ENCODE measurements at regions of chr3 and their contacts with region 1.

Region 1: DNA sequence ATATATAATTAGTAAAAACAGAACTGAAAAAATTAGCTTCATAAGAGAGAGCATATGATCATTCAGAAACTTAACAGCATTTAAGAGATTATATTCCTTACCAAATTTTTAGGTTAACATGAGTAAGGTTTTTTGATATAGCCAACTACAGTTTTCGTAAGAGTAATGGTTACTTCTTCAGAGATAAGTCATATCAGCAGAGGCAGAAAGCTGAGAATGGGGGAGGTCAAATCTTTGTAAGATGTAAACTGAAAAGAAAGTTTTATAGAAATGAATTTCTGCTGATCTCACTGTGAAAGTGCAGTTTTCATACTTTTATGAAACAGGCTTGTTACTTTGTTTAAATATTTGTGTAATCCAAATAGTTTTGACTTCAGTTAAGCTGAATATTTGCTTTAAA is 193.3 kb downstream of the ZBTB20 start:
- DNase-seq: no peak
- H3K4me3 ChIP-seq: no peak overlapping the region
- H3K4me3 Mint-ChIP-seq: no peak overlapping the region
- H3K27ac Mint-ChIP-seq: no peak overlapping the region
- H3K4me1 ChIP-seq: no peaks in the 10 kb centered on the region
- H3K4me1 Mint-ChIP-seq: no peaks in the 10 kb centered on the region
- H3K27me3 ChIP-seq: no peaks in the 10 kb centered on the region; the same call in 1 of the 2 replicates
- H3K27me3 Mint-ChIP-seq: no peaks in the 10 kb centered on the region
- CTCF ChIP-seq: no peak

Region 2: DNA sequence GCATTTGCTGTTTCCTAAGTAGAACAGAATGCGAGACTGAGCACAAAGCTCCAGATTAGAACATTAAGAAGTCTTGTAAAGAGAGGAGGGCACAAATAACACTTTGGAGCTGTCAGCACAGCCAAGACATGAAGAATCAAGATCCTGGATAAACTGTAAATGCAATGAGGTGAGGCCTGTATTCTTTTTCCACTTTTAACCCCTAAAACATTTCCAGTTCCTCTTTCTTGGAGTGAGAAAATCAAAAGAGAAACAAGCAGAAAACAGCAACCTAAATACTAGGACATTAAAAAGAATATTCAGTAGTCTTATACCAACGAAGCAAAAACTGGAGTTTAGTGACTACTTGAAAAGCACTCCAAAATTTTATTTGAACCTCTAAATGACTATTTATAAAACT is 11.0 kb before region 1 on chr3:
- CTCF ChIA-PET with region 1: no interaction called
- POLR2A ChIA-PET with region 1: no interaction called
- intact Hi-C with region 1: loop called (anchors 1 kb)
- DNase-seq: no peak
- H3K4me3 ChIP-seq: no peak overlapping the region
- H3K4me3 Mint-ChIP-seq: no peak overlapping the region
- H3K27ac Mint-ChIP-seq: no peak overlapping the region
- H3K4me1 ChIP-seq: no peaks in the 10 kb centered on the region
- H3K4me1 Mint-ChIP-seq: no peaks in the 10 kb centered on the region
- H3K27me3 ChIP-seq: no peaks in the 10 kb centered on the region
- H3K27me3 Mint-ChIP-seq: peaks cover 9% of the 10 kb centered on the region
- CTCF ChIP-seq: no peak

Region 3: GRCh38 chr3:115074502-115074901 is 120.7 kb after region 1 on chr3:
- CTCF ChIA-PET with region 1: no interaction called
- POLR2A ChIA-PET with region 1: no interaction called
- intact Hi-C with region 1: no loop called
- DNase-seq: no peak
- H3K4me3 ChIP-seq: no peak overlapping the region
- H3K4me3 Mint-ChIP-seq: no peak overlapping the region
- H3K27ac Mint-ChIP-seq: no peak overlapping the region
- H3K4me1 ChIP-seq: peaks cover 12% of the 10 kb centered on the region
- H3K4me1 Mint-ChIP-seq: no peaks in the 10 kb centered on the region
- H3K27me3 ChIP-seq: no peaks in the 10 kb centered on the region
- H3K27me3 Mint-ChIP-seq: peaks cover 7% of the 10 kb centered on the region
- CTCF ChIP-seq: no peak